Activated CD4-positive, alpha-beta T cell treated with anti-CD3 and anti-CD28 coated beads for 36 hours (primary cell): ENCODE measurements at regions of chr7 and their contacts with region 1.

Region 1: GRCh38 chr7:36389371-36390198 is at the start of gene ANLN:
- DNase-seq: peak; percentile 92
- ATAC-seq: peak; percentile 86
- H3K4me3 Mint-ChIP-seq: peak within 1 kb of the TSS; percentile 87
- H3K27ac Mint-ChIP-seq: peak within 1 kb of the TSS; percentile 83
- H3K4me1 Mint-ChIP-seq: peaks cover 26% of the 10 kb centered on the region
- H3K27me3 Mint-ChIP-seq: peaks cover 8% of the 10 kb centered on the region
- total RNA-seq, gene ANLN: 52.5 to 58.3 TPM

Region 2: GRCh38 chr7:36152756-36153570 is 236.6 kb before region 1 on chr7 and contains the start of gene EEPD1:
- CTCF ChIA-PET with region 1: no interaction called
- POLR2A ChIA-PET with region 1: no interaction called
- intact Hi-C with region 1: loop called in 1 of 2 experiments (anchors 1 kb)
- DNase-seq: peak; percentile 100
- ATAC-seq: peak; percentile 98
- H3K4me3 Mint-ChIP-seq: peak within 1 kb of the TSS; percentile 71
- H3K27ac Mint-ChIP-seq: peak within 1 kb of the TSS; percentile 43
- H3K4me1 Mint-ChIP-seq: peaks cover 29% of the 10 kb centered on the region
- H3K27me3 Mint-ChIP-seq: no peaks in the 10 kb centered on the region
- total RNA-seq, gene EEPD1: 1.3 TPM

Region 3: DNA sequence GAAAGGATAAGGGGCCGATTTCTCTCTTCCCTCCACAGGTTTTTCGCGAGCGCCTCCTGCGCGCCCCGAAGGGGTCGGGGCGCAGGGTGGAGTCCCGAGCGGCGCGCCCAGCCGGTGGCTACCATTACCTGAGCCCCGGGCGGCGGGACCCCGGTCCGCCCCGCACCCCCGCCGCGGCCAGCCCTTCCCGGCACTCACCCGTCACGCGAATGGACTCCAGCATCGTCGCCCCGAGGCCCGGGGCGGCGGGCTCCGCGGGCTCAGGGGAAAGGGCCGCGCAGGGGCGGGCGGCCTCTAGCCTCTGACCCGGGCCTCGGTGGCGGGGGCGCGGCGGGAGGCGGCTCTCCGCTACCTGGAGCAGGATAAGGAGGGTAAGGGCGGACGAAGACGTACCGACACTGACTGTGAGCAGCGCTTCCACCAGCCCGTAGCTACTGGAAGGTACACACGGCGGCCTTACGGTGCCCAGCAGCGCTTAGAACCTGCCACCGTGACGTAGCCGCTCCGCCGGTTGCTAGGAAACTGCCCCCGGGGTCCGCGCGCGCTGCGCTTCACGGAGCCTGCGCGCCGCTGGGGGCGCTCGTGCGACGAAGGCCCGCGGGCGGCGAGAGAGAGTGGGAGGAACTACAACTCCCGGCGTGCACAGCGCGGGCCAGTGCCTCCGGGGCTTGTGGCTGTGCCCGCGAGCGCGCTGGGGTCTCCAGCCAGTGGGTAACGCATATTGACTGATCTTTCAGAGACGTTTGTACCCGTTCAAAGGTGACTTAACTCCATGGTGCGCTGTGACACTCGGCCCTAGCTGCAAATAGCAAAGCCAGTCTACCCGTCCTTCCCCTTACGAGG is 22.6 kb before region 1 on chr7:
- CTCF ChIA-PET with region 1: interaction called, 12 read pairs
- POLR2A ChIA-PET with region 1: interaction called, 5 read pairs
- intact Hi-C with region 1: loop called (anchors 1 kb)
- DNase-seq: peak; percentile 95
- ATAC-seq: peak; percentile 98
- H3K4me3 Mint-ChIP-seq: peak overlapping the region; percentile 83
- H3K27ac Mint-ChIP-seq: peak overlapping the region; percentile 19
- H3K4me1 Mint-ChIP-seq: no peaks in the 10 kb centered on the region
- H3K27me3 Mint-ChIP-seq: peaks cover 10% of the 10 kb centered on the region

Region 4: DNA sequence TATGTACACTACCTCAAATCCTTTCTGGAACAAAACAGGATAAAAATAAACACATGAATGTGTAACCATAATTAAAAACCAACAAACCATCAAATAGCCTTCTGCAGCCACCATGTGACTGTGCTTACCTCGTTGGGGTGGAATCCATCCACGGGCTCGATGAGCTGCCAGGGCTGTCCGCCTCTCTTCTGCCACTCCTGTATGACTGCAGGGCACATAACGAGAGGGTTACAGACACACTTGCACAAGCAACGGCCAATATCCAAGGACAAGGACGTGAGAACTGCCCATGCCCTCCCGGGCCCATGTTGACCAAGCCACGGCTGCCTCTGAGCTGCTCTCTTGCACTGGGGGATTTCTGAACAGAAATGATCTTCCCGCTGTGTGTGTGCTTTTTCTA is 132.3 kb after region 1 on chr7:
- CTCF ChIA-PET with region 1: no interaction called
- POLR2A ChIA-PET with region 1: no interaction called
- intact Hi-C with region 1: no loop called
- DNase-seq: no peak
- ATAC-seq: no peak
- H3K4me3 Mint-ChIP-seq: no peak overlapping the region
- H3K27ac Mint-ChIP-seq: no peak overlapping the region
- H3K4me1 Mint-ChIP-seq: peaks cover 11% of the 10 kb centered on the region
- H3K27me3 Mint-ChIP-seq: no peaks in the 10 kb centered on the region

Region 5: GRCh38 chr7:36600869-36601530 is 211.4 kb after region 1 on chr7:
- CTCF ChIA-PET with region 1: no interaction called
- POLR2A ChIA-PET with region 1: no interaction called
- intact Hi-C with region 1: loop called in 1 of 2 experiments (anchors 5 kb)
- DNase-seq: peak; percentile 52
- ATAC-seq: peak; percentile 89
- H3K4me3 Mint-ChIP-seq: no peak overlapping the region
- H3K27ac Mint-ChIP-seq: peak overlapping the region; percentile 35
- H3K4me1 Mint-ChIP-seq: peaks cover 65% of the 10 kb centered on the region
- H3K27me3 Mint-ChIP-seq: no peaks in the 10 kb centered on the region

Region 6: GRCh38 chr7:37031571-37032257 is 642.1 kb after region 1 on chr7:
- CTCF ChIA-PET with region 1: no interaction called
- POLR2A ChIA-PET with region 1: no interaction called
- intact Hi-C with region 1: loop called in 1 of 2 experiments (anchors 2 kb)
- DNase-seq: peak; percentile 73
- ATAC-seq: peak; percentile 90
- H3K4me3 Mint-ChIP-seq: no peak overlapping the region
- H3K27ac Mint-ChIP-seq: peak overlapping the region; percentile 52
- H3K4me1 Mint-ChIP-seq: peaks cover 77% of the 10 kb centered on the region
- H3K27me3 Mint-ChIP-seq: no peaks in the 10 kb centered on the region